ENCODE measurements at regions of chr9 and their contacts with region 1.

Region 1: GRCh38 chr9:35636135-35636876 is 14.4 kb downstream of the SIT1 start:
- DNase-seq: no peak
- H3K4me3 ChIP-seq: no peak overlapping the region
- H3K27ac ChIP-seq: no peak overlapping the region
- H3K4me1 ChIP-seq: no peaks in the 10 kb centered on the region
- H3K27me3 ChIP-seq: peaks cover 6 to 8% of the 10 kb centered on the region in 2 experiments
- CTCF ChIP-seq: no peak
- POLR2A ChIP-seq: no peak

Region 2: GRCh38 chr9:35618854-35619799 is 17.2 kb before region 1 on chr9:
- CTCF ChIA-PET with region 1: interaction called, 11 read pairs
- POLR2A ChIA-PET with region 1: no interaction called
- dilution Hi-C with region 1: no loop called
- intact Hi-C with region 1: no loop called
- DNase-seq: no peak
- H3K4me3 ChIP-seq: no peak overlapping the region
- H3K27ac ChIP-seq: no peak overlapping the region
- H3K4me1 ChIP-seq: no peaks in the 10 kb centered on the region
- H3K27me3 ChIP-seq: peaks cover 31 to 38% of the 10 kb centered on the region in 2 experiments
- CTCF ChIP-seq: no peak
- POLR2A ChIP-seq: no peak

Region 3: GRCh38 chr9:35882263-35882848 is 246.1 kb after region 1 on chr9:
- CTCF ChIA-PET with region 1: no interaction called
- POLR2A ChIA-PET with region 1: no interaction called
- dilution Hi-C with region 1: no loop called
- intact Hi-C with region 1: no loop called
- DNase-seq: peak; percentile 75
- H3K4me3 ChIP-seq: no peak overlapping the region
- H3K27ac ChIP-seq: no peak overlapping the region
- H3K4me1 ChIP-seq: peaks cover 5% of the 10 kb centered on the region
- H3K27me3 ChIP-seq: peaks cover 4 to 17% of the 10 kb centered on the region in 2 experiments
- CTCF ChIP-seq: peak; percentile 91 to 96
- POLR2A ChIP-seq: no peak

Measured in endothelial cell of umbilical vein (primary cell).